B cell (primary cell): ENCODE measurements at regions of chr2 and their contacts with region 1.

Region 1: GRCh38 chr2:44361330-44362206 is at the starts of genes CAMKMT and PREPL:
- DNase-seq: peak; percentile 99
- ATAC-seq: peak; percentile 86
- H3K4me3 ChIP-seq: peak within 1 kb of the TSS; percentile 80 to 95 (median 88)
- H3K4me3 Mint-ChIP-seq: peak within 1 kb of the TSS; percentile 98
- H3K27ac ChIP-seq: peak within 1 kb of the TSS; percentile 99 to 100
- H3K27ac Mint-ChIP-seq: peak within 1 kb of the TSS; percentile 100
- H3K4me1 ChIP-seq: peaks cover 17 to 20% of the 10 kb centered on the region in 2 donors
- H3K4me1 Mint-ChIP-seq: peaks cover 34% of the 10 kb centered on the region
- H3K27me3 ChIP-seq: no peaks in the 10 kb centered on the region
- H3K27me3 Mint-ChIP-seq: no peaks in the 10 kb centered on the region
- CTCF ChIP-seq: no peak
- total RNA-seq, gene CAMKMT: 23.3 and 26.1 TPM in 2 replicates
- total RNA-seq, gene PREPL: 34.0 and 36.4 TPM in 2 replicates

Region 2: GRCh38 chr2:43595603-43596412 is 765.8 kb before region 1 on chr2 and contains the start of gene THADA:
- CTCF ChIA-PET with region 1: no interaction called
- POLR2A ChIA-PET with region 1: no interaction called
- intact Hi-C with region 1: loop called (anchors 5 kb)
- DNase-seq: peak; percentile 98
- ATAC-seq: peak; percentile 98
- H3K4me3 ChIP-seq: peak within 1 kb of the TSS; percentile 69 to 94 (median 80)
- H3K4me3 Mint-ChIP-seq: peak within 1 kb of the TSS; percentile 98
- H3K27ac ChIP-seq: peak within 1 kb of the TSS; percentile 94
- H3K27ac Mint-ChIP-seq: peak within 1 kb of the TSS; percentile 96
- H3K4me1 ChIP-seq: peaks cover 12 to 21% of the 10 kb centered on the region in 2 donors
- H3K4me1 Mint-ChIP-seq: peaks cover 24% of the 10 kb centered on the region
- H3K27me3 ChIP-seq: no peaks in the 10 kb centered on the region
- H3K27me3 Mint-ChIP-seq: peaks cover 3% of the 10 kb centered on the region
- CTCF ChIP-seq: no peak
- total RNA-seq, gene THADA: 48.5 and 53.7 TPM in 2 replicates

Region 3: GRCh38 chr2:43773876-43774613 is 587.5 kb before region 1 on chr2 and contains the start of gene DYNC2LI1:
- CTCF ChIA-PET with region 1: no interaction called
- POLR2A ChIA-PET with region 1: no interaction called
- intact Hi-C with region 1: loop called (anchors 2 kb)
- DNase-seq: peak; percentile 83
- ATAC-seq: peak; percentile 99
- H3K4me3 ChIP-seq: peak within 1 kb of the TSS; percentile 76 to 89 (median 82)
- H3K4me3 Mint-ChIP-seq: peak within 1 kb of the TSS; percentile 98
- H3K27ac ChIP-seq: peak within 1 kb of the TSS in 1 of 2 donors; percentile 69
- H3K27ac Mint-ChIP-seq: peak within 1 kb of the TSS; percentile 82
- H3K4me1 ChIP-seq: peaks cover 0 to 11% of the 10 kb centered on the region in 2 donors
- H3K4me1 Mint-ChIP-seq: peaks cover 13% of the 10 kb centered on the region
- H3K27me3 ChIP-seq: no peaks in the 10 kb centered on the region
- H3K27me3 Mint-ChIP-seq: peaks cover 16% of the 10 kb centered on the region
- CTCF ChIP-seq: no peak
- total RNA-seq, gene DYNC2LI1: 11.4 and 12.7 TPM in 2 replicates

Region 4: DNA sequence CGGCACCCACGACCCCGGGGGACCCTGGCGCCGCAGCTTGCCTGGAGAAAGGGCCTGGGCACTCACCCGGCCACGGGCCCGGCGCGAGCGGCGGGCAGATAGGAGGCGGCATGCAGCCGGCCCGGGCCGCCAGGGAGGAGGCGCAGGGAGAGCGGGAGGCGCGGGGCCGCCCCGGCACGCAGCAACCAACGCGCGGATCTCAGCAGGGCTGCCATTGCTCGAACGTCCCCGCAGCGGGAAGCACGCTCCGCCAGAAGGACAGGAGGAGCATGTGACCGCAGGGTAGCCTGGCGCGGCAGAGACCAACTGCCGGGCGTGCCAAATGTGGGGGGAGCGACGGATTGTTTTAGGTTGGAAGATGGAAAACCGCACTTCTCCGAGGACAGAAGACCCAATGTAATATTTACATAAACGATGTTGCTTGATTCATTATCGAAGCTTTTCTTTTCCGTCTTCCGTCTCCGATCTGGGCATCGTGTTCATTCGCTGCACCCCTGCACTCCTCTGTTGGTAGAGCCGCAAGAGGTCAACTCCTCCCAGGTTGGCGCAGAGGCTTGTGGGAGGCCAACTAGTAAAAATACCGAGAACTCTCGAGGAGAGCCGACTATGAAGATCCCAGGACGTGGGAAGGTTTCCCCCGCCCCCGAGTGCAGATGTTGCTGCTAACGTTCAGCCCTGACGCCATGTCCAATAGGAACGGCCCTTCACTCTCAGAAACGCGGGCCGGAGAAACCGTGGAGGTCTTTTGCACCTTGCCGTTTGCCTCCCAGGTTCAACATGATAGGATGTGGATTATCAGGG is 365.6 kb before region 1 on chr2 and contains the start of gene LRPPRC:
- CTCF ChIA-PET with region 1: no interaction called
- POLR2A ChIA-PET with region 1: interaction called, 3 read pairs
- intact Hi-C with region 1: loop called (anchors 1 kb)
- DNase-seq: peak; percentile 96
- ATAC-seq: peak; percentile 94
- H3K4me3 ChIP-seq: peak within 1 kb of the TSS; percentile 75 to 98 (median 79)
- H3K4me3 Mint-ChIP-seq: peak within 1 kb of the TSS; percentile 90
- H3K27ac ChIP-seq: peak within 1 kb of the TSS; percentile 69 to 89
- H3K27ac Mint-ChIP-seq: peak within 1 kb of the TSS; percentile 96
- H3K4me1 ChIP-seq: peaks cover 24 to 28% of the 10 kb centered on the region in 2 donors
- H3K4me1 Mint-ChIP-seq: peaks cover 47% of the 10 kb centered on the region
- H3K27me3 ChIP-seq: no peaks in the 10 kb centered on the region
- H3K27me3 Mint-ChIP-seq: peaks cover 5% of the 10 kb centered on the region
- CTCF ChIP-seq: no peak
- total RNA-seq, gene LRPPRC: 75.6 and 77.3 TPM in 2 replicates

Region 5: GRCh38 chr2:44087036-44087713 is 274.4 kb before region 1 on chr2:
- CTCF ChIA-PET with region 1: no interaction called
- POLR2A ChIA-PET with region 1: no interaction called
- intact Hi-C with region 1: loop called (anchors 1 kb)
- DNase-seq: peak; percentile 87
- ATAC-seq: peak; percentile 97
- H3K4me3 ChIP-seq: peak overlapping the region; percentile 43 to 70 (median 57)
- H3K4me3 Mint-ChIP-seq: peak overlapping the region; percentile 66
- H3K27ac ChIP-seq: peak overlapping the region; percentile 44 to 71
- H3K27ac Mint-ChIP-seq: peak overlapping the region; percentile 54
- H3K4me1 ChIP-seq: peaks cover 24 to 32% of the 10 kb centered on the region in 2 donors
- H3K4me1 Mint-ChIP-seq: peaks cover 23% of the 10 kb centered on the region
- H3K27me3 ChIP-seq: no peaks in the 10 kb centered on the region
- H3K27me3 Mint-ChIP-seq: no peaks in the 10 kb centered on the region
- CTCF ChIP-seq: peak; percentile 97

Region 6: DNA sequence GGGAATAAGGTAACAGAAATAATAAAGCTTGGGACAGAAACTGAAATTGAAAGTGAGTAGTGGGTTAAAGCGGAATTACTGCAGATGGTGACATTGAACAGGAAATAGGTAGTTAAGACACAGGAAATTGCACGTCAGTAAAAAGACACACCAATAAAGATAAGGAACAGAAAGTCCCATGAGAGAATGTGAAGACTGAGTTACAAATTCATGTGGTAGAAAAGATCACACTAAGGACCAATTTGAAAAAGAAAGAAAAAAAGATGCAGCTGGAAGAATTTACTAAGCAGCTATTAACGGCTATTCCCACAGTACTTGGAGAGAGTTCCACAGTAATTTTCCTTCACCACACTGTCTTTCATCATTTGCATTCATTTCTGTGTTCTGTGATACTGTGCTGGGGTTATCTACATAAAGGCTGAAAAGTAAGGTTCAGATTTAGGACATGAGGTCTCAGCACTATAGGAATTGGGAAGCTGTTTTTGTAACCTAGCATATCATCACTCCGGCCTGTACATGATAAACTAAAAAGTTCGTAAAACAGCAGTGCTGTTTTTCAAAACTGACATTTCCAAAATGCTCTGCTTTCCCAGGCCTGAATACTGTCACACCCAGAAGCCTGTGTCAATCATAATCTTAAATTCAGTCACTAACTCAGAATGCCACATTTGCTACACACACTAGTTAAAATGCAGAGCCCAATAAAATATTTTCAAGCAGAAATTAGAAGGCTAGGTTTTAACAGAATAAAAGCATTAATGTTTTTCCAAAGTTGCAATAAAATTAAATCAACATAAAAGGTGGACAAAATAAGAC is 1206.6 kb after region 1 on chr2:
- CTCF ChIA-PET with region 1: no interaction called
- POLR2A ChIA-PET with region 1: no interaction called
- intact Hi-C with region 1: loop called (anchors 5 kb)
- DNase-seq: peak; percentile 88
- ATAC-seq: peak; percentile 97
- H3K4me3 ChIP-seq: peak overlapping the region; percentile 11 to 70 (median 50)
- H3K4me3 Mint-ChIP-seq: peak overlapping the region; percentile 85
- H3K27ac ChIP-seq: peak overlapping the region; percentile 75 to 91
- H3K27ac Mint-ChIP-seq: peak overlapping the region; percentile 86
- H3K4me1 ChIP-seq: peaks cover 10 to 12% of the 10 kb centered on the region in 2 donors
- H3K4me1 Mint-ChIP-seq: peaks cover 10% of the 10 kb centered on the region
- H3K27me3 ChIP-seq: no peaks in the 10 kb centered on the region
- H3K27me3 Mint-ChIP-seq: no peaks in the 10 kb centered on the region
- CTCF ChIP-seq: no peak